ENCODE measurements at regions of chr12 and their contacts with region 1.

Region 1: GRCh38 chr12:52416383-52416750 is 10.2 kb upstream of the KRT82 start:
- DNase-seq: peak in 4 of 5 donors; percentile 56 to 66 (median 57)
- ATAC-seq: peak; percentile 79 to 91 (median 86)
- H3K4me3 ChIP-seq: no peak overlapping the region
- H3K27ac ChIP-seq: peak overlapping the region in 7 of 12 donors; percentile 11 to 76 (median 68)
- H3K4me1 ChIP-seq: peaks cover 0 to 21% (median 0%) of the 10 kb centered on the region in 12 donors
- H3K27me3 ChIP-seq: peaks cover 0 to under 1% (median 0%) of the 10 kb centered on the region in 9 donors
- CTCF ChIP-seq: no peak
- POLR2A ChIP-seq: no peak

Region 2: GRCh38 chr12:52495389-52495788 is 79.0 kb after region 1 on chr12:
- intact Hi-C with region 1: loop called in 1 of 10 experiments (anchors 10 kb)
- DNase-seq: no peak
- ATAC-seq: no peak
- H3K4me3 ChIP-seq: no peak overlapping the region
- H3K27ac ChIP-seq: peak overlapping the region in 2 of 12 donors; percentile 11 to 66
- H3K4me1 ChIP-seq: peaks cover 0 to 25% (median 5%) of the 10 kb centered on the region in 12 donors
- H3K27me3 ChIP-seq: peaks cover 0 to 16% (median 0%) of the 10 kb centered on the region in 9 donors
- CTCF ChIP-seq: no peak
- POLR2A ChIP-seq: no peak